Activated CD4-positive, alpha-beta T cell treated with anti-CD3 and anti-CD28 coated beads, Interleukin-2, amount 10 ng/mL, durations not matched to agents 7 days and 5 days (primary cell): ENCODE measurements at regions of chr14 and their contacts with region 1.

Region 1: GRCh38 chr14:74135426-74135825 is 50.7 kb downstream of the LIN52 start:
- DNase-seq: no peak
- H3K4me3 Mint-ChIP-seq: no peak overlapping the region
- H3K27ac Mint-ChIP-seq: peak overlapping the region; percentile 61
- H3K4me1 Mint-ChIP-seq: peaks cover 24% of the 10 kb centered on the region
- H3K27me3 Mint-ChIP-seq: no peaks in the 10 kb centered on the region

Region 2: DNA sequence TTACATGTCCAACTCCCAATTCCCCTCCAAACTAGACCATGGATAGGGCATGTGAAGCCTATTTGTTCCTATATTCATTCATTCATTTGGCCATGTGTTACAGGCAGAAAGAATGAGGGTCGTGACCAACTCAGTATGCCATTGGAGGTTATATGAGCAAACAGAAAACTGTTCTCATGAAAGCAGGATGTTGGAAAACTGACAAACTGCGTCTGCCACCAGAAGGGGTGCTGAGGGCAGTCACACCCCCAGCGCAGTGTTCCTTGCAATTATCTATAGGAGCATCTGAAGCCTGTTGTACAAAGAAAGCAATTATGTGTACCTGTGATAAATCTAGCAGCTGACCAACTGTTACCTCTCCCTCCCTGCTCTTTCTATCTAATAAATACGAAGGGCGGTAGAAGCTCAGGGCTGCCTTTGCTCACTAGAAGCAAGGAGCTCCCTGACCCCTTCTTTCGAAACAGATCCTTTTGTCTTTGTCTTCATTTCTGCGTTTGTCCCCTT is 137.4 kb before region 1 on chr14:
- CTCF ChIA-PET with region 1: no interaction called
- POLR2A ChIA-PET with region 1: no interaction called
- DNase-seq: no peak
- H3K4me3 Mint-ChIP-seq: no peak overlapping the region
- H3K27ac Mint-ChIP-seq: no peak overlapping the region
- H3K4me1 Mint-ChIP-seq: peaks cover 1% of the 10 kb centered on the region
- H3K27me3 Mint-ChIP-seq: no peaks in the 10 kb centered on the region

Region 3: GRCh38 chr14:74109369-74109768 is 26.1 kb before region 1 on chr14:
- CTCF ChIA-PET with region 1: no interaction called
- POLR2A ChIA-PET with region 1: interaction called, 20 read pairs
- DNase-seq: no peak
- H3K4me3 Mint-ChIP-seq: no peak overlapping the region
- H3K27ac Mint-ChIP-seq: no peak overlapping the region
- H3K4me1 Mint-ChIP-seq: peaks cover 2% of the 10 kb centered on the region
- H3K27me3 Mint-ChIP-seq: no peaks in the 10 kb centered on the region

Region 4: GRCh38 chr14:74155287-74155686 is 19.9 kb after region 1 on chr14:
- CTCF ChIA-PET with region 1: no interaction called
- POLR2A ChIA-PET with region 1: no interaction called
- DNase-seq: no peak
- H3K4me3 Mint-ChIP-seq: no peak overlapping the region
- H3K27ac Mint-ChIP-seq: no peak overlapping the region
- H3K4me1 Mint-ChIP-seq: no peaks in the 10 kb centered on the region
- H3K27me3 Mint-ChIP-seq: no peaks in the 10 kb centered on the region

Region 5: DNA sequence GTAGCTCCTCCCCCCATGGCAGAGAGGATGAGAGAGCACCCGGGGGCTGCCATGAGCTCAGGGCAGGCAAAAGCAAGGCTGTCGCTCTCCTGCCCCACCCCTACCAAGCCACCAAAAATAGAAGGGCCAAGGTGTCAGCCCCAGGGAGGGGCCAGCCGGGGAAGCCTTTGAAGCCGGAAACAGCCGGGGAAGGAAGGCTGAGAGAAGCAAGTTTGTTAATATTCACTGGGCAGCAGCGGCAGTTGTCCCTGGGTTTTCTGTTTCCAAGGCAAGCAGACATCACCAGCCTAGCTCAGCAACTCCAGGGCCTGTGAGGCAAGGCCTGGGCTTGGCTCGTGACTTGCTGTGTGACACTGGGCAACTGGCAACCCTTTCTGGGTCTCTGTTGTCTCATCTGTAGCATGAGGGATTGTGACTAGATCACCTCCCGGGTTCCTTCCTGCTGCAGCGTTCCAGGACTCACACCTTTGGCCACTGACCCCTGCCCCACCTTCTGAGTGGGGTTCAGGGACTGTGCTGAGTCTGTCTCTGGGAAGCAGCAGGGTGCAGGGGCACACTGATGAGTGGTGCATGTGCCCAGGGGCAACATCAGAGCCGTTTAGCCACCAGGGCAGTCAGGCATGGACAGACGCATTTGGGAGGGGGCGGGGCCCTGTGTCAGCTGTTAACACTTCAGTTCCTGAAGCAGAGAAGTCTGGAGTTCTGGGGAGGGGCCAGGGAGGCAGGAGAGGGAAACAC is 266.2 kb after region 1 on chr14:
- CTCF ChIA-PET with region 1: no interaction called
- POLR2A ChIA-PET with region 1: no interaction called
- DNase-seq: peak; percentile 80
- H3K4me3 Mint-ChIP-seq: peak overlapping the region; percentile 49
- H3K27ac Mint-ChIP-seq: peak overlapping the region; percentile 92
- H3K4me1 Mint-ChIP-seq: peaks cover 30% of the 10 kb centered on the region
- H3K27me3 Mint-ChIP-seq: peaks cover 12% of the 10 kb centered on the region